BJ (cell line): ENCODE measurements at regions of chr2 and their contacts with region 1.

Region 1: GRCh38 chr2:232126301-232127099 is 165.0 kb downstream of the DIS3L2 start:
- DNase-seq: no peak
- H3K4me3 ChIP-seq: no peak overlapping the region
- H3K27me3 ChIP-seq: no peaks in the 10 kb centered on the region
- CTCF ChIP-seq: no peak

Region 2: GRCh38 chr2:230658877-230659652 is 1467.4 kb before region 1 on chr2:
- CTCF ChIA-PET with region 1: no interaction called
- POLR2A ChIA-PET with region 1: no interaction called
- DNase-seq: no peak
- H3K4me3 ChIP-seq: no peak overlapping the region
- H3K27me3 ChIP-seq: no peaks in the 10 kb centered on the region
- CTCF ChIP-seq: no peak

Region 3: GRCh38 chr2:231917280-231918066 is 209.0 kb before region 1 on chr2:
- CTCF ChIA-PET with region 1: no interaction called
- POLR2A ChIA-PET with region 1: interaction called, 19 read pairs
- DNase-seq: no peak
- H3K4me3 ChIP-seq: no peak overlapping the region
- H3K27me3 ChIP-seq: peaks cover 9% of the 10 kb centered on the region
- CTCF ChIP-seq: no peak

Region 4: DNA sequence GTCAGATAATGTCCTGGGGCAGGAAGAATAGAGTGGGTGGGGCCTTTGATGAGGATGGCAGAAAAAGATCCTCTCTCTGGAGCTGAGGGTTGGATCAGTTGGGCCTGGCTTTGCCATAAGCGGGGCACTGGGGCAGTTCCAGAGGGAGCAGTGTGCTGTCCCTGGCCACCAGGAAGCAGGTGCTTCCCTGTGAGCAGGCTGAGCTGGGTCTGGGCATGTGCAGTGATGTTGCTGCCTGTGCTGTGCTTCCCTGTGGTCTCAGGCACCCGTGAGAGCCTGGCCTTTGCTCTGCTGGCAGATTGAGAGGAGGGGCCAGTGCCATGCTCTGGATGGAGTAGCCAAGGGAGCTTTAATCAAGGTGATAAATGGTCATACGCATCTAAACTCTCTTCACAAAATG is 185.7 kb before region 1 on chr2:
- CTCF ChIA-PET with region 1: no interaction called
- POLR2A ChIA-PET with region 1: no interaction called
- DNase-seq: no peak
- H3K4me3 ChIP-seq: no peak overlapping the region
- H3K27me3 ChIP-seq: peaks cover 4% of the 10 kb centered on the region; the same call in 1 of the 2 replicates
- CTCF ChIP-seq: no peak